ENCODE measurements at regions of chr19 and their contacts with region 1.

Region 1: GRCh38 chr19:35545001-35545911 is at the start of gene TMEM147:
- DNase-seq: no peak
- ATAC-seq: peak; percentile 95
- H3K4me3 ChIP-seq: peak within 1 kb of the TSS; percentile 77
- H3K27ac ChIP-seq: peak within 1 kb of the TSS; percentile 86
- H3K4me1 ChIP-seq: peaks cover 22% of the 10 kb centered on the region
- H3K27me3 ChIP-seq: no peaks in the 10 kb centered on the region
- CTCF ChIP-seq: no peak
- EP300 ChIP-seq: no peak; a peak in 1 of 4 replicates
- POLR2A ChIP-seq: peak; percentile 93
- RAD21 ChIP-seq: no peak
- polyA plus RNA-seq, gene TMEM147: 53.4 to 65.3 TPM

Region 2: GRCh38 chr19:35509861-35510625 is 35.2 kb before region 1 on chr19:
- CTCF ChIA-PET with region 1: interaction called, 61 read pairs
- POLR2A ChIA-PET with region 1: interaction called, 6 read pairs
- RAD21 ChIA-PET with region 1: interaction called, 10 read pairs
- SMC1A ChIA-PET with region 1: interaction called, 12 read pairs
- in situ Hi-C with region 1: no loop called
- intact Hi-C with region 1: loop called (anchors 2 kb)
- DNase-seq: no peak
- ATAC-seq: peak; percentile 88
- H3K4me3 ChIP-seq: peak overlapping the region; percentile 74
- H3K27ac ChIP-seq: peak overlapping the region; percentile 52
- H3K4me1 ChIP-seq: peaks cover 8% of the 10 kb centered on the region
- H3K27me3 ChIP-seq: no peaks in the 10 kb centered on the region; a peak in 1 of 4 replicates
- CTCF ChIP-seq: peak; percentile 96; a peak in 5 of 6 replicates
- EP300 ChIP-seq: no peak
- POLR2A ChIP-seq: no peak; the same call in 1 of the 2 replicates
- RAD21 ChIP-seq: peak; percentile 71

Region 3: DNA sequence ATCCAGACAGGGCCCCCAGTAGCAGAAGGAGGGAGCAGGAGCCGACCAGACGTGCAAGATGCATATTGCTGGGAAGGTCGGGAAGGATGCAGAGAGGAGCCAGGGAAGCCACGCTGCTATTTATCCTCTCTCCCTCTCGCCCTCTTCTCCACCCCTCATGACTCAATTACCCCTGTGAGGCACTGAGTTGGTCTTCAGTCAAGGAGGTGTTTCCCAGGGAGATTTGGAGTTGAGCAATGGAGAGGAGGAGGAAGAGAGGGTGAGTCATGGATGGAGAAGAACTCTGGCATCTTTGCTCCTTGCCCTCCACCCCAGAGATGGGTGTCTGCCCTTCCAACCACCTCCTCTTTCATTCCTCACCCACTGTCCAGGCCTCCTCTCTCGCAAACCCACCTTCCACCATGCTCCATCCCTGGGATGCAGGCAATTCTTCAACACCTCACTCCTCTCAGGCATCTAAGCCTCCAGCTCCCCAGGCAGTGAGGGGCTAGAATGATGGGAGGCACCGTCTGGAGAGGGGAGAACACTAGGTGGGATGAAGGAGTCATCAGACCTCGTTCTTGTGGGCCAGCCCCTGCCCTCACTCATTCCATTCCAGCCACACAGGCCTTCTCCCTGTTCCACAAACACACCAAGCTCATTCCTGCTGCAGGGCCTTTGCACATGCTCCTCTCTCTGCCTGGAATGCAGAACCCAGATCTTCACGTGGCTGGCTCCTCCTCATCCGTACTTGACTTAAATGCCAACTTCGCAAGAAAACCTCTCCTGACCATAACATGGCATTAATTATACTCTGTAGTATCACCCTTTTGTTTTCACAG is 16.8 kb before region 1 on chr19 and contains the start of gene SBSN:
- CTCF ChIA-PET with region 1: interaction called, 11 read pairs
- POLR2A ChIA-PET with region 1: no interaction called
- RAD21 ChIA-PET with region 1: no interaction called
- SMC1A ChIA-PET with region 1: interaction called, 3 read pairs
- in situ Hi-C with region 1: no loop called
- intact Hi-C with region 1: no loop called
- DNase-seq: no peak
- ATAC-seq: no peak
- H3K4me3 ChIP-seq: no peak within 1 kb of the TSS
- H3K27ac ChIP-seq: no peak within 1 kb of the TSS
- H3K4me1 ChIP-seq: peaks cover 2% of the 10 kb centered on the region; the same call in 1 of the 2 replicates
- H3K27me3 ChIP-seq: peaks cover 0 to 13% of the 10 kb centered on the region in 2 experiments; a peak in 3 of 4 replicates
- CTCF ChIP-seq: no peak
- EP300 ChIP-seq: no peak
- POLR2A ChIP-seq: no peak
- RAD21 ChIP-seq: no peak
- polyA plus RNA-seq, gene SBSN: not detected

Region 4: DNA sequence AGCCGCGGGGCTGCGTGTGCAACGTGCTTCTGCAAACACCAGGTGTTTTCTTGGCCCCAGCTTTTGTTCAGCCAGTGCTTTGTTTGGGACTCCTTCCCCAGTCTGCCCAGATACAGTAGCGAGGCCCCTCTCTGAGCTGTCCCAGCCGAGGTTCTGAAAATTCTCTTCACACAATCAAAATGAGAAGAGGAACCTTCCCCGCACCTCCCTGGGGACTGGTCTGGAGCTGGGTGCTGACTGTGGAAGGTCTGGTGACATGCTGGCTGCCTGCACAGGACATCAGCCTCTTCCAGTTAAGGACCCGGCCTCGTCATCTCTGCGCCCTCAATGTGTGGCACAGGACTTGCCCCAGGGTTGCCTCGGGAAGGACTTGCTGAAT is 14.0 kb after region 1 on chr19:
- CTCF ChIA-PET with region 1: interaction called, 17 read pairs
- POLR2A ChIA-PET with region 1: interaction called, 3 read pairs
- RAD21 ChIA-PET with region 1: no interaction called
- SMC1A ChIA-PET with region 1: interaction called, 3 read pairs
- in situ Hi-C with region 1: no loop called
- intact Hi-C with region 1: no loop called
- DNase-seq: peak; percentile 46
- ATAC-seq: peak; percentile 87
- H3K4me3 ChIP-seq: no peak overlapping the region
- H3K27ac ChIP-seq: no peak overlapping the region
- H3K4me1 ChIP-seq: peaks cover 30% of the 10 kb centered on the region
- H3K27me3 ChIP-seq: no peaks in the 10 kb centered on the region; a peak in 2 of 4 replicates
- CTCF ChIP-seq: no peak
- EP300 ChIP-seq: no peak
- POLR2A ChIP-seq: no peak
- RAD21 ChIP-seq: no peak

Region 5: GRCh38 chr19:35592226-35592625 is 47.0 kb after region 1 on chr19:
- CTCF ChIA-PET with region 1: interaction called, 63 read pairs
- POLR2A ChIA-PET with region 1: no interaction called
- RAD21 ChIA-PET with region 1: interaction called, 6 read pairs
- SMC1A ChIA-PET with region 1: interaction called, 10 read pairs
- in situ Hi-C with region 1: no loop called
- intact Hi-C with region 1: loop called (anchors 1 kb)
- DNase-seq: no peak
- ATAC-seq: no peak
- H3K4me3 ChIP-seq: no peak overlapping the region
- H3K27ac ChIP-seq: no peak overlapping the region
- H3K4me1 ChIP-seq: no peaks in the 10 kb centered on the region; the same call in none of the 2 replicates
- H3K27me3 ChIP-seq: no peaks in the 10 kb centered on the region
- CTCF ChIP-seq: peak; percentile 64 to 74 (median 70); a peak in 5 of 6 replicates
- EP300 ChIP-seq: no peak
- POLR2A ChIP-seq: no peak
- RAD21 ChIP-seq: peak; percentile 84

Region 6: DNA sequence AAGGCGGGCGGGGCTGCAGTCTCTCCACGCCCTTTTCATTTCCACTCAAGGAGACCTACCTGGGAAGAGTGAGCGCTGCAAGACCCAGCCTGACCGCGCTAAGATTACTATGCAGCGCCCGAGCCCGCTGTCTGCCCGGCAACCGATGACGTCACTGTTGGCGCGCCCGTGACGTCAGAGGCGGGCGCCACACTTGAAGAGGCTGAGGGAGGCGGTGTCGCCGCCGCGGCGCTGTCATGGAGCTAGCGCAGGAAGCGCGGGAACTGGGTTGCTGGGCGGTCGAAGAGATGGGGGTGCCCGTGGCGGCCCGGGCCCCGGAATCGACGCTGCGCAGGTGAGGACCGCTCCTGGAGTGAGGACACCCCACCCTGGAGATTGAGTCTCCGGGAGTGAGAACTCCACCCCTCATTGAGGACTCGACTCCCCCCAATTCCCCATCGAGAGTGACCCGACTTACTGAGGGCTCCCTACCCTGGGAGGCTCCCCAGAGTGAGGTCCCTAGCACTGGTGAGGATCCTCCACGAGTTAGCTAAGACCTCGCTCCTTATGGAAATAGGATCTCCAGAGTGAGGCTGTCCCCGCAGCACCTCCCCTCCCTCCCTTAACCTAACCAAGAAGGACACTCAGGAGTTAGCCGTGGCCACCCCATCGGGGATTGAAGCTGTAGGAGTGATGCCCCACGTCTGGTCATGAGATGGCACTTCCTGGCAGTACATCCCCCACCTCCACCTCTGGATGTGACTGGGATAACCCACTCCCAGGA is 67.5 kb after region 1 on chr19 and contains the start of gene HAUS5:
- CTCF ChIA-PET with region 1: interaction called, 10 read pairs
- POLR2A ChIA-PET with region 1: interaction called, 5 read pairs
- RAD21 ChIA-PET with region 1: interaction called, 3 read pairs
- SMC1A ChIA-PET with region 1: interaction called, 4 read pairs
- in situ Hi-C with region 1: no loop called
- intact Hi-C with region 1: loop called (anchors 5 kb)
- DNase-seq: peak; percentile 70
- ATAC-seq: peak; percentile 92
- H3K4me3 ChIP-seq: peak within 1 kb of the TSS; percentile 74
- H3K27ac ChIP-seq: peak within 1 kb of the TSS; percentile 81
- H3K4me1 ChIP-seq: peaks cover 17% of the 10 kb centered on the region
- H3K27me3 ChIP-seq: no peaks in the 10 kb centered on the region
- CTCF ChIP-seq: peak in 1 of 3 experiments; percentile 24; a peak in 1 of 6 replicates
- EP300 ChIP-seq: peak in 1 of 2 experiments; percentile 57; a peak in 1 of 4 replicates
- POLR2A ChIP-seq: peak; percentile 91
- RAD21 ChIP-seq: no peak
- polyA plus RNA-seq, gene HAUS5: 3.1 to 3.6 TPM

Region 7: DNA sequence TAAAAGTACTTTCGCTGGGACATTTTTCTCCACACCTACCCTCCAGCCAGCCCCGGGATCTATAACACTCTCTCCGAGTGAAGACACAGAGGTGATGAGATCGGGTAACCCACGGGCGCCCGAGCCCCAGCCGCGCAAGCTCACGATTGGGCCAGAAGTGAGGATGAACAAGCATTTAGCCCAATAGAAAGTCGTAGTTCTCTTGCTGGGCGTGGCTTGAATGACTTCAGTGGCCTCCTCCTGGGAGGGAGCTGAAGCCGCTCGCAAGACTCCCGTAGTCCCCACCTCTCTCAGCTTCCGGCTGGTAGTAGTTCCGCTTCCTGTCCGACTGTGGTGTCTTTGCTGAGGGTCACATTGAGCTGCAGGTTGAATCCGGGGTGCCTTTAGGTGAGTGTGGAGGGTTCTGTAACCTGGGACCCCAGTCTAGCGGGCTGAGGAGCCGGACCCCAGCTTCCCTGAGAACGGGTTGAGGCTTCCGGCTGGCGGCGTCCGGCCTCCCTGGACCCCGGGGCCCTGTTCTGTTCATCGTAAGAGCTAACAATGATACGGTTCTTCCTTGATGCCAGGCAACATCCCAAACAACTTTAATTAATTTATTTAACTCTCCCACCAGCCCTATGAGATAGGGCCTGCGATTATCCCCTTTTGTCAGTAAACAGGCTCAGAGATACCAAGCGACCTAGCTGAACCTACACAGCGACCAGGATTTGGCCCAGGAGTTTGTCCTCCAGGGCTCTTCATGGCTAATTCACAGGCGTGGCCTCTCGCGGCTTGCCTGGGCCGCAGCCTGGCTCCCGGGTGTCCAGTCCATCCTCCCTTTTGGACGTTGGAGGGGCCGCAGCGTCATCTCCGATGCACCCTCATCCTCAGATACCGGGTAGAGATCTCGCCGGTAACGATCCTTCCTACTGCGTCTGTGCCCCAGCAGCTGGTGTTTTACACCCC is 103.0 kb after region 1 on chr19 and contains the start of gene COX6B1:
- CTCF ChIA-PET with region 1: interaction called, 8 read pairs
- POLR2A ChIA-PET with region 1: interaction called, 3 read pairs
- RAD21 ChIA-PET with region 1: interaction called, 4 read pairs
- SMC1A ChIA-PET with region 1: interaction called, 10 read pairs
- in situ Hi-C with region 1: no loop called
- intact Hi-C with region 1: no loop called
- DNase-seq: peak; percentile 96
- ATAC-seq: peak; percentile 77
- H3K4me3 ChIP-seq: peak within 1 kb of the TSS; percentile 99
- H3K27ac ChIP-seq: peak within 1 kb of the TSS; percentile 85
- H3K4me1 ChIP-seq: peaks cover 11% of the 10 kb centered on the region
- H3K27me3 ChIP-seq: no peaks in the 10 kb centered on the region
- CTCF ChIP-seq: no peak
- EP300 ChIP-seq: no peak
- POLR2A ChIP-seq: peak; percentile 91
- RAD21 ChIP-seq: no peak
- polyA plus RNA-seq, gene COX6B1: 1,597 to 1,700 TPM